ENCODE measurements at regions of chr13 and their contacts with region 1.

Region 1: GRCh38 chr13:33334831-33335230 is 49.3 kb upstream of the STARD13 start:
- DNase-seq: no peak

Region 2: DNA sequence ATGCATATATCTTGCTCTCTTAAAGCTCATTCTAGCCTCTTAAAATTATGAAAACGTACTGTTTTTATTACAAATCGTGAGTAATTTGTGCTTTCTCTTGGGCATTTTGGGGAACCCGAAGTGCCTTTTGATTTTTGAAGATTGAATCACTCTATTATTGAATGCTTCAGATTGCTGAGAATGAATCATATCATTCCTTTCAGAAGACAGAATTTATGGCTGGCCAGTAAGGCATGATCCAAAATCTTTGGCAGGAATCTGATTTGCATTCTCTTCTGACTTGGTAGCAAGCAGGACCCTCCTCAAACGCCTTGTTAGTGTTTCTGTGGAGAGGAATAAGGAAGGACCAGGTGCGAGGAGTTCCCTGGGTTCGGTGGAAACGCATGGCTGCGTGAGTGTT is 98.8 kb before region 1 on chr13:
- intact Hi-C with region 1: no loop called
- DNase-seq: no peak

Region 3: GRCh38 chr13:33296793-33297425 is 37.9 kb before region 1 on chr13:
- intact Hi-C with region 1: no loop called
- DNase-seq: no peak

Region 4: DNA sequence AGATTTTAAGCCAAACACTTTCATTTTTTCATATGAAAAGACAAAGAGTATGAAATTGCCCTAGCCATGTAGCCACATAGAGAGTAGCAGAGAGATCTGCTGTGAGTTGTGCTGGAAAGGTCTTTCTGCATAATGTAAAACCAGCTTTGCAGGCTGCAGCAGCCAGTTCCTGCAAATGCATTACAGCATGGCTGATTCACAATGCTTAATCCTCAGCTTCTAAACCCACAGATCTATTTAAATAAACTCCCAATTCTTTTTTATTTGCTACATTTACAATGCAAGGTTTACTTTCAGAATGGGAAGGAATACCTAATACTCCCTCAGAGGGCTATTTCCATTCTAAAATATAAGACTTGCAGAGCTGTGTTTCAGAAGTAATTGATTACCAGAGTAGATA is 136.4 kb after region 1 on chr13:
- intact Hi-C with region 1: no loop called
- DNase-seq: no peak

Region 5: GRCh38 chr13:33730147-33730546 is 395.3 kb after region 1 on chr13:
- intact Hi-C with region 1: loop called (anchors 5 kb)
- DNase-seq: no peak

Measured in cardiac septum (tissue), 1 donor.